Activated naive CD4-positive, alpha-beta T cell treated with anti-CD3 and anti-CD28 coated beads for 36 hours (primary cell): ENCODE measurements at regions of chr13 and their contacts with region 1.

Region 1: DNA sequence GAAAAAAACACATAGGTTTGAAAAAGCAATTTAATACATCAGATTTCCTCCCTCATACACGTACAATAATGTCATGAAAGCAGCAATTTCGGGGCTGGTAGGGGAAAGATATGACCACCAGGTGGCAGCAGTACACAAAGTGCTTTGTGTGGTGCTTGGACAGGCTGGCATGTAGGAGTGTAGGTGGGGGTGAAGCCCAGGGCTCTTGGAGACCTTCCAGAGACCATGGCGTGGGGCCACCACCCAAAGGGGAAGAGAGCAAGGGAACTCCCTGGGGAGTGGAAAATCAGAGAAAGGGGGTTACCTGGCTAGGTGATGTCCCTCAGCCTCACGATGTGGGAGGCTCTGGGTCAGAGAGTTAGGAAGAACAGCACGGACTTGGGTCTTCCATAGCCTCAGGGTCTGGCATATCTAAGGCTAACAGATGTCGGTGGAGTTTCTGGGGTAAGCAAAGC is 11.8 kb upstream of the CCNA1 start:
- DNase-seq: peak; percentile 85
- H3K4me3 Mint-ChIP-seq: no peak overlapping the region
- H3K27ac Mint-ChIP-seq: peak overlapping the region; percentile 8
- H3K4me1 Mint-ChIP-seq: peaks cover 13% of the 10 kb centered on the region
- H3K27me3 Mint-ChIP-seq: peaks cover 60% of the 10 kb centered on the region

Region 2: GRCh38 chr13:36282818-36283445 is 137.5 kb before region 1 on chr13:
- CTCF ChIA-PET with region 1: interaction called, 7 read pairs
- intact Hi-C with region 1: loop called (anchors 5 kb)
- DNase-seq: no peak
- H3K4me3 Mint-ChIP-seq: no peak overlapping the region
- H3K27ac Mint-ChIP-seq: no peak overlapping the region
- H3K4me1 Mint-ChIP-seq: no peaks in the 10 kb centered on the region
- H3K27me3 Mint-ChIP-seq: peaks cover 17% of the 10 kb centered on the region

Region 3: DNA sequence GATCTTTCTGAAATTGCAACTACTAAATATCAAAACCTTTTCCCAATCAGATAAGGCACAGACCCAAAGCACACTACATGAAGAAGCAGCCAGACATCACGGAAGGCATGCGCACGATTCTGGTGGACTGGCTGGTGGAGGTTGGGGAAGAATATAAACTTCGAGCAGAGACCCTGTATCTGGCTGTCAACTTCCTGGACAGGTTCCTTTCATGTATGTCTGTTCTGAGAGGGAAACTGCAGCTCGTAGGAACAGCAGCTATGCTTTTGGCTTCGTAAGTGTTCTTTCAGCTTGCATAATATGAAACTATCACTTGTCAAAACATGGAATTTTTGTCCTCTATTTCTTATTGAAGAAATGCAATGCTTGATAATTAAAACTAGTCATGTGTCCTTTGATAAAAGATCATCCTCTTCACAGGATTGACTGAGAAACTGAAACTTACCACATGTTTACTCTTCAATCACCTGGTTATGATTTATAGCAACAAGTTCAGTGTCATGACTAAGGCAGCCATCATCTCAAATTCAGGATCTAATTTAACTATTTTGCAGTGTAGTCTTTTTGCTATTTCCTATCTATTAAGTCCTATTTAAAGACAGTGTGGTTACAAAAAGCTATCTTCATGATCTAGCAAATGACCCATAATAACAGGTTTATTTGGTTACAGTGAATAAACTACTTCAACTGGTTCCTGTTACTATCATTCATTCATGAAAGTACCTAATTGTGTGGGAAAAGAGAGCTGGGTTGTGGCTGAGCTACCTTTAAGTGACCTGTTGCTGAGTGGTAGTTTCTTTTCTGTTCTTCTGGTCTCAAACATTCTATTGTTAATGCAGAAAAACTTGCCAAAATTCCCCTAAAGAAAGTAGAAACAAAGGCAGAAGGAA is 18.4 kb after region 1 on chr13:
- CTCF ChIA-PET with region 1: interaction called, 5 read pairs
- intact Hi-C with region 1: loop called (anchors 1 kb)
- DNase-seq: no peak
- H3K4me3 Mint-ChIP-seq: no peak overlapping the region
- H3K27ac Mint-ChIP-seq: no peak overlapping the region
- H3K4me1 Mint-ChIP-seq: peaks cover 18% of the 10 kb centered on the region
- H3K27me3 Mint-ChIP-seq: peaks cover 18% of the 10 kb centered on the region

Region 4: GRCh38 chr13:36818804-36819738 is 398.6 kb after region 1 on chr13 and contains the start of gene RFXAP:
- CTCF ChIA-PET with region 1: no interaction called
- intact Hi-C with region 1: loop called (anchors 2 kb)
- DNase-seq: peak; percentile 89
- H3K4me3 Mint-ChIP-seq: peak within 1 kb of the TSS; percentile 93
- H3K27ac Mint-ChIP-seq: peak within 1 kb of the TSS; percentile 75
- H3K4me1 Mint-ChIP-seq: peaks cover 45% of the 10 kb centered on the region
- H3K27me3 Mint-ChIP-seq: peaks cover 8% of the 10 kb centered on the region
- total RNA-seq, gene RFXAP: 9.2 to 12.2 TPM

Region 5: GRCh38 chr13:36981156-36981743 is 560.8 kb after region 1 on chr13:
- CTCF ChIA-PET with region 1: no interaction called
- intact Hi-C with region 1: loop called (anchors 2 kb)
- DNase-seq: no peak
- H3K4me3 Mint-ChIP-seq: no peak overlapping the region
- H3K27ac Mint-ChIP-seq: no peak overlapping the region
- H3K4me1 Mint-ChIP-seq: peaks cover 2% of the 10 kb centered on the region
- H3K27me3 Mint-ChIP-seq: no peaks in the 10 kb centered on the region

Region 6: DNA sequence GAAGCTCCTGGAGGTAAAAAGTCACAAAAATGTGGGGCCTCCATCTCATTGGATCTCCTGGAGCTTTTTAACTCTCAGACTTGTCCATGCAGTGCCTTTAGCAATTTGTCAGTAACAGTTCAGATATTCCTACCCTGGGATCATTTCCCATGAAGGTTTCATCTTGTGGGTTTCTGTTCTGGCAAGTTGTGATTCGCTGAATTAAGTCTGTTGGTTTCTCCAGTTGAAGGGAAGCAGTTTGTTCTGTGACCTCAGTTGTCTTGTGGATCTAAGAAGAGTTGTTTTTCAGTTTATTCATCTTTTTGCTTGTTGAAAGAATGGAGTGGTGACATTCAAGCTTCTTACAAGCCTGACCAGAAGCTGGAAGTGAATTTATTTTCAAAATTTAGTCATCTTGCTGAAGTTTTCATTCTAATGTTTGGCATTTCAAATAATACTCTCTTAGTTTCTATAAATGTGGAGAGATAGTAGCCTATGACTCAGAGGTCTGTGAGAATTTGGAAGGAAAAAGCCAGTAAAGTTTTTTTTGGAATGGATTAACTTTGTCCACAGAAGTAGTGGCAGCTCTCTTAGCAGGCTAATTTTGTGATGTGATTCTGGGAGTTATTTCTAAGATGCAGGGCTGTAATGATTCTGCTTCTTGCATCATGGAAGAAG is 805.1 kb after region 1 on chr13:
- CTCF ChIA-PET with region 1: no interaction called
- intact Hi-C with region 1: no loop called
- DNase-seq: no peak
- H3K4me3 Mint-ChIP-seq: no peak overlapping the region
- H3K27ac Mint-ChIP-seq: no peak overlapping the region
- H3K4me1 Mint-ChIP-seq: no peaks in the 10 kb centered on the region
- H3K27me3 Mint-ChIP-seq: no peaks in the 10 kb centered on the region